PC-3 (cell line): ENCODE measurements at regions of chr14 and their contacts with region 1.

Region 1: DNA sequence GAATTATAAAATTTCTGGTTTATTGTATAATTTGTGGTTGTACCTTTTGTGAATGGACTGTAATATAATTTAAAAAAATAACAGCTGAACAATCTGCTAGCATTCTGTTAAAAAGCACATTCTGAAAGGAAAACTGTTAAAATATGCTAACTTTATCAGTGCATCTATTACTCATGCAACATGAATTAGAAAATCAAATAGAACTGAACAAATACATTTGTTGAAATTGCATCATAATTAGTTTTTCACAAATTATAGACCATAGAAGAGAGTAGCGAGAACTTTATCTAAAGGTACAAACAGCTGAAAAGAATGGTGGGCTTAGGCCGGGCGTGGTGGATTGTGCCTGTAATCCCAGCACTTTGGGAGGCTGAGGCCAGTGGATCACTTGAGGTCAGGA is 33.0 kb downstream of the PTPN21 start:
- DNase-seq: peak; percentile 74
- ATAC-seq: peak; percentile 47
- H3K4me3 ChIP-seq: no peak overlapping the region
- H3K27ac ChIP-seq: peak overlapping the region; percentile 88
- H3K4me1 ChIP-seq: peaks cover 44% of the 10 kb centered on the region
- H3K27me3 ChIP-seq: no peaks in the 10 kb centered on the region
- CTCF ChIP-seq: no peak

Region 2: GRCh38 chr14:88492272-88493089 is 29.3 kb before region 1 on chr14:
- CTCF ChIA-PET with region 1: no interaction called
- POLR2A ChIA-PET with region 1: no interaction called
- intact Hi-C with region 1: loop called (anchors 1 kb)
- DNase-seq: peak; percentile 88
- ATAC-seq: peak; percentile 88
- H3K4me3 ChIP-seq: no peak overlapping the region
- H3K27ac ChIP-seq: no peak overlapping the region
- H3K4me1 ChIP-seq: no peaks in the 10 kb centered on the region
- H3K27me3 ChIP-seq: no peaks in the 10 kb centered on the region
- CTCF ChIP-seq: peak; percentile 96

Region 3: GRCh38 chr14:88551094-88551870 is 29.5 kb after region 1 on chr14:
- CTCF ChIA-PET with region 1: interaction called, 3 read pairs
- POLR2A ChIA-PET with region 1: interaction called, 4 read pairs
- intact Hi-C with region 1: loop called (anchors 1 kb)
- DNase-seq: peak; percentile 90
- ATAC-seq: peak; percentile 52
- H3K4me3 ChIP-seq: peak overlapping the region; percentile 82
- H3K27ac ChIP-seq: no peak overlapping the region
- H3K4me1 ChIP-seq: peaks cover 24% of the 10 kb centered on the region
- H3K27me3 ChIP-seq: no peaks in the 10 kb centered on the region
- CTCF ChIP-seq: peak; percentile 41; the same call in 1 of the 2 replicates

Region 4: DNA sequence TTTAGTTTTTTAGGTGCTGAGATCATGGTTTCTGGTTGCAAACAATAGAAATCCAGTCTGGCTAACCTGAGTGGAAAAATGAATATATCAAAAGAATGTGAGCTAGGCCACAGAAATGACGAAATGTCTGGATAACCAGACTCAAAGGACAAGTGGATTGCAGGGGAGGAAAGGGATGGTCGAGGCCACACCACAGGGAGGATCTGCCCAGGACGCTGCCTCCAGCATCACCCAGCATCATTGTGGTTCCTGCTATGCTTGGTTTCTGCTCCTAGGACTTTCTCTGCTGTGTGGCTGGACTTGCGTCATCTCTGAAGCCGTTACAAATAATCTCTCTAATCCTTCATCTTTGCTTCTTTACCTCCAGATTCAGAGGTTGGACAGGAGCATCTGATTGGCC is 383.0 kb after region 1 on chr14:
- CTCF ChIA-PET with region 1: no interaction called
- POLR2A ChIA-PET with region 1: no interaction called
- intact Hi-C with region 1: no loop called
- DNase-seq: no peak
- ATAC-seq: no peak
- H3K4me3 ChIP-seq: no peak overlapping the region
- H3K27ac ChIP-seq: no peak overlapping the region
- H3K4me1 ChIP-seq: no peaks in the 10 kb centered on the region
- H3K27me3 ChIP-seq: no peaks in the 10 kb centered on the region
- CTCF ChIP-seq: no peak